SK-N-SH (cell line): ENCODE measurements at regions of chrX and their contacts with region 1.

Region 1: GRCh38 chrX:31036895-31037294 is 34.9 kb downstream of the FTHL17 start:
- DNase-seq: peak; percentile 34
- H3K4me3 ChIP-seq: no peak overlapping the region
- H3K27ac ChIP-seq: no peak overlapping the region
- H3K4me1 ChIP-seq: no peaks in the 10 kb centered on the region
- H3K27me3 ChIP-seq: no peaks in the 10 kb centered on the region
- CTCF ChIP-seq: peak; percentile 70
- EP300 ChIP-seq: no peak
- RAD21 ChIP-seq: peak; percentile 71

Region 2: GRCh38 chrX:30851449-30851848 is 185.4 kb before region 1 on chrX:
- CTCF ChIA-PET with region 1: no interaction called
- POLR2A ChIA-PET with region 1: no interaction called
- DNase-seq: no peak
- H3K4me3 ChIP-seq: no peak overlapping the region
- H3K27ac ChIP-seq: no peak overlapping the region
- H3K4me1 ChIP-seq: no peaks in the 10 kb centered on the region
- H3K27me3 ChIP-seq: no peaks in the 10 kb centered on the region
- CTCF ChIP-seq: no peak
- EP300 ChIP-seq: no peak
- RAD21 ChIP-seq: no peak

Region 3: GRCh38 chrX:31053621-31054020 is 16.7 kb after region 1 on chrX:
- CTCF ChIA-PET with region 1: interaction called, 30 read pairs
- POLR2A ChIA-PET with region 1: no interaction called
- DNase-seq: no peak
- H3K4me3 ChIP-seq: no peak overlapping the region
- H3K27ac ChIP-seq: no peak overlapping the region
- H3K4me1 ChIP-seq: no peaks in the 10 kb centered on the region
- H3K27me3 ChIP-seq: no peaks in the 10 kb centered on the region
- CTCF ChIP-seq: no peak
- EP300 ChIP-seq: no peak
- RAD21 ChIP-seq: no peak

Region 4: DNA sequence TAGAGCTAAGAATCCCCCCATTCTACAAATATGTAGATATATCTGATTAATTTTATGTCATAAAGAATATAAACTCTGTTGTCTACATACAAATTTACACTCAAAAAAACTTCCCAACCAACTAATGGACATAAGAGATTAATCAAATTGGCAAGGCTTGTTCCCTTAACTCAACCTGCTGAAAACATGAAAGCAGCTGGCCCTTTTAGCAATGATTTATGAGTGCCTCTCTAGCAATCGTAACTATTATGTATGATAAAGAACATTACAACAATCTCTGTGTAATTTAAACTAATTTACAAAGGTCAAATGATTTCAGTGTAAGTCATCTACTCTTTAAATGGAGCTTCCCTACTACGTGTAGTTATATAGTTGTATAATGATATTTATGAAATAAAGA is 118.1 kb after region 1 on chrX:
- CTCF ChIA-PET with region 1: interaction called, 36 read pairs
- POLR2A ChIA-PET with region 1: interaction called, 4 read pairs
- DNase-seq: peak; percentile 10
- H3K4me3 ChIP-seq: no peak overlapping the region
- H3K27ac ChIP-seq: peak overlapping the region in 1 of 2 experiments; percentile 55; a peak in 1 of 4 replicates
- H3K4me1 ChIP-seq: no peaks in the 10 kb centered on the region
- H3K27me3 ChIP-seq: no peaks in the 10 kb centered on the region
- CTCF ChIP-seq: no peak
- EP300 ChIP-seq: peak in 1 of 2 experiments; percentile 80; a peak in 2 of 4 replicates
- RAD21 ChIP-seq: no peak

Region 5: GRCh38 chrX:31293409-31293808 is 256.5 kb after region 1 on chrX:
- CTCF ChIA-PET with region 1: interaction called, 16 read pairs
- POLR2A ChIA-PET with region 1: no interaction called
- DNase-seq: no peak
- H3K4me3 ChIP-seq: no peak overlapping the region
- H3K27ac ChIP-seq: no peak overlapping the region
- H3K4me1 ChIP-seq: no peaks in the 10 kb centered on the region
- H3K27me3 ChIP-seq: no peaks in the 10 kb centered on the region
- CTCF ChIP-seq: peak; percentile 17; the same call in 1 of the 2 replicates
- EP300 ChIP-seq: no peak
- RAD21 ChIP-seq: peak; percentile 66

Region 6: GRCh38 chrX:31435592-31435991 is 398.7 kb after region 1 on chrX:
- CTCF ChIA-PET with region 1: no interaction called
- POLR2A ChIA-PET with region 1: no interaction called
- DNase-seq: no peak
- H3K4me3 ChIP-seq: no peak overlapping the region
- H3K27ac ChIP-seq: no peak overlapping the region
- H3K4me1 ChIP-seq: no peaks in the 10 kb centered on the region
- H3K27me3 ChIP-seq: no peaks in the 10 kb centered on the region
- CTCF ChIP-seq: no peak
- EP300 ChIP-seq: no peak
- RAD21 ChIP-seq: no peak

Region 7: DNA sequence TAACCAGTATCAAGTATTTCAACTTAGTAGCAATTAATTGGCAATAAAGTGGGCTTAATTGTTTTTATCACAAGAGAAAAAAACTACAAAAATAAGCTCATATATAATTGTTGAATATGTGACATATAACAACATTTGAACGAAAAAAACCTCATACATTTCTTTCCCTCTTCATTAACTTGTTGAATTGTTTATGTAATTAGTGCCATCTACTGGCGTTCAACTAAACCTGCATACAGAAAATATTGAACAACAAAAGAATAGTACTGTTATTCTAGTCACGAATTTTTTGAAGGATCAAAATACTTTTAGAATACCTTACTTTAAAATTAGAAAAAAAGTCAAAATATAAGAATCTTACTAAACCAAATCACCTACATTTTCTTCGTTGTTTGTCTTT is 621.5 kb after region 1 on chrX:
- CTCF ChIA-PET with region 1: interaction called, 63 read pairs
- POLR2A ChIA-PET with region 1: no interaction called
- DNase-seq: peak; percentile 6
- H3K4me3 ChIP-seq: no peak overlapping the region
- H3K27ac ChIP-seq: no peak overlapping the region
- H3K4me1 ChIP-seq: no peaks in the 10 kb centered on the region
- H3K27me3 ChIP-seq: no peaks in the 10 kb centered on the region
- CTCF ChIP-seq: peak; percentile 83
- EP300 ChIP-seq: no peak
- RAD21 ChIP-seq: peak; percentile 76